Motor neuron (in vitro differentiated cells): ENCODE measurements at regions of chr5 and their contacts with region 1.

Region 1: GRCh38 chr5:77560677-77561263 is 68.7 kb upstream of the WDR41 start:
- ATAC-seq: peak in 5 of 8 experiments; percentile 25 to 77 (median 69)
- H3K4me3 ChIP-seq: no peak overlapping the region
- H3K27ac ChIP-seq: no peak overlapping the region
- H3K4me1 ChIP-seq: no peaks in the 10 kb centered on the region

Region 2: GRCh38 chr5:77312411-77312810 is 248.4 kb before region 1 on chr5:
- in situ Hi-C with region 1: no loop called
- ATAC-seq: peak in 3 of 8 experiments; percentile 32 to 92 (median 91)
- H3K4me3 ChIP-seq: no peak overlapping the region
- H3K27ac ChIP-seq: no peak overlapping the region
- H3K4me1 ChIP-seq: no peaks in the 10 kb centered on the region

Region 3: GRCh38 chr5:78008356-78008967 is 447.7 kb after region 1 on chr5:
- in situ Hi-C with region 1: loop called in 1 of 9 experiments (anchors 25 kb)
- ATAC-seq: peak in 6 of 8 experiments; percentile 40 to 78 (median 68)
- H3K4me3 ChIP-seq: no peak overlapping the region
- H3K27ac ChIP-seq: no peak overlapping the region
- H3K4me1 ChIP-seq: peaks cover 14 to 32% of the 10 kb centered on the region in 2 donors

Region 4: DNA sequence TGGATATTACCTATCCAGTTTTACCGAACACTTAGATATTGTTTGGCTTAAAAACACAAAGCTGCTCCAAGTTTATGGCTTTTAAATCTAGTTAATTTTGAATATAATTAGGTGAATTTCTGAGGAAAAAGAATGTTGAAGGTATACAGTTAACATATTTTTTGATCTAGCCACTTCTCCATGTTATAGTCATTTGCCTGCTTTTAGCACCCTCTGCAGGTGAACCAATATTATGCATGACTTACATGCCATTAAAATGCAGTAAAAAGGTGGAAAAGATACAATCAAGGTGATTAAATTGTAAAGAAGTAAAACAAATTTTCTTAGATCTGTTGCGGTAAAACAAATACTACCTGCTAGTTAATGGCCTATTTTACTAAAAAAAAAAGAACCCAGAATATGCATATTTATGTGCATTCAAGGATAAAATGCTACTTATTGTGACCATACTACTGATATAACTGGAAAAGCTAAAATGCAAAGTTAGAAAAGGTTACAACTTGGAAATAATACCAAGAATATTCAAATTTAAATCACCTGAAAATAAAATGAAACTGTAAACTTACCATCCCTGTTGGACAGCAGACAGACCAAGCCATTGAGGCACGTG is 601.6 kb after region 1 on chr5:
- in situ Hi-C with region 1: loop called in 1 of 9 experiments (anchors 25 kb)
- ATAC-seq: no peak
- H3K4me3 ChIP-seq: no peak overlapping the region
- H3K27ac ChIP-seq: no peak overlapping the region
- H3K4me1 ChIP-seq: no peaks in the 10 kb centered on the region